CD8-positive, alpha-beta memory T cell (primary cell): ENCODE measurements at regions of chr6 and their contacts with region 1.

Region 1: GRCh38 chr6:30489081-30490025 is at the start of gene HLA-E:
- DNase-seq: peak; percentile 73 to 96 (median 93)
- H3K4me3 ChIP-seq: peak within 1 kb of the TSS; percentile 99
- H3K4me3 Mint-ChIP-seq: peak within 1 kb of the TSS; percentile 93 to 100 (median 99)
- H3K27ac ChIP-seq: peak within 1 kb of the TSS; percentile 98
- H3K27ac Mint-ChIP-seq: peak within 1 kb of the TSS; percentile 93 to 100 (median 98)
- H3K4me1 ChIP-seq: peaks cover 41% of the 10 kb centered on the region
- H3K4me1 Mint-ChIP-seq: peaks cover 39 to 55% (median 44%) of the 10 kb centered on the region in 3 donors
- H3K27me3 ChIP-seq: no peaks in the 10 kb centered on the region
- H3K27me3 Mint-ChIP-seq: peaks cover 0 to 5% of the 10 kb centered on the region in 2 donors
- total RNA-seq, gene HLA-E: 502 to 511 TPM

Region 2: DNA sequence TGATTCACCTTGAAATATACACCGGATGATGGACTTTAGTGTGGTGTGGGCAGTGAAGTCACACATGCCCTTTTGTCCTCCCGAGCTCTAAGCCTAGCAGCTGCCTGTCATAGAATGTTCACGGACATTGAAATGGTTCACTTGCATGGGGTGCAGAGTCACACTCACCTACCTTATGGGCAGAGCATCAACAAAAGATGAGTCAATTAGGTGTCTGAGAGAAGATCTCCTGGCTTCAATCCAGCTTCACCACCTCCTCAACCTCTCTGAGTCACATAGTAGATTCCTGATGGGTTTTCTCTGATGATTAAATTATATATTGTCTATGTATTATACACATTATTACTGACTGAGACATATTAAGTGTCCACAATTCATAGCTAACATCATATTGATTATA is 48.2 kb before region 1 on chr6:
- CTCF ChIA-PET with region 1: no interaction called
- POLR2A ChIA-PET with region 1: no interaction called
- DNase-seq: no peak
- H3K4me3 ChIP-seq: no peak overlapping the region
- H3K4me3 Mint-ChIP-seq: no peak overlapping the region
- H3K27ac ChIP-seq: no peak overlapping the region
- H3K27ac Mint-ChIP-seq: no peak overlapping the region
- H3K4me1 ChIP-seq: peaks cover 4% of the 10 kb centered on the region
- H3K4me1 Mint-ChIP-seq: peaks cover 2 to 8% (median 4%) of the 10 kb centered on the region in 3 donors
- H3K27me3 ChIP-seq: peaks cover 45% of the 10 kb centered on the region
- H3K27me3 Mint-ChIP-seq: peaks cover 49 to 81% of the 10 kb centered on the region in 2 donors

Region 3: DNA sequence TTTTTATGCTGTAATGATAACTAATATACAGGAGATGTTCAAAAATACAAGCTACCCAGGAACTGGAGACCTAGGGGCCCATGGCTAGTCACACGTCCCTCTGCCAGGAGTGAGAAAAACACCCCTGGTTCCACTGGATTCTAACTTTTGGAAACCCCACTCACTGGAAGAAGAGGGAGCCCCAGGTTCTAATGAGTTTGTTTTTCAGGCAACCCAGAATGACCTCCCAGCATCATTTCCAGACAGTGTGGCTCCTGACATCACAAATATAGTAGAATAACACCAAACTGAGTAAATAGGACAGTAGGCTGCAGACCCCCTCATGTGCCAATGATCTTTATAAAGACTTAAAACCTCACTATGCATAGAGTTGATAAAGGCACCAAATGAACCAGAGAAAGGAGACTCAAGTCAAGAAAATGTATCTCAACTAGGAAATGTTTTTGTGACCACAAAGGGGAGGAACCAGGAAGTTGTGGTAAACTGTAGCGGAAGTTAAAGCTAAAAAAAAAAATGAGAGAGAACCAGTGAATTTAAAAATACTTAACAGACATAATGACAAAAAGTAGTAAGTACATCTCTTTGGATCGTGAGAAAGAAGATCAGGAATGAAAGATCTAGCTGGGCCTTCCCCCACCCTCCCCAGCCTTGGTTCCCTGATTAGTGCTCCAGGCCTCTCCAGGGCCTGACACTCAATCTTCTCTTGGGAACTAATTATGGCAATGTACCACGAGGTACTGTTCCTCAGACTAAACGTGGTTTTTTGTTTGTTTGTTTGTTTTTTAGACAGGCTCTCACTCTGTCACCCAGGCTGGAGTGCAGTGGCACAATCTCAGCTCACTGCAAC is 19.8 kb after region 1 on chr6:
- CTCF ChIA-PET with region 1: interaction called, 50 read pairs
- POLR2A ChIA-PET with region 1: interaction called, 94 read pairs
- DNase-seq: peak in 2 of 5 donors; percentile 79 to 84
- H3K4me3 ChIP-seq: peak overlapping the region; percentile 27
- H3K4me3 Mint-ChIP-seq: peak overlapping the region; percentile 59 to 82 (median 72)
- H3K27ac ChIP-seq: no peak overlapping the region
- H3K27ac Mint-ChIP-seq: peak overlapping the region; percentile 71 to 97 (median 86)
- H3K4me1 ChIP-seq: peaks cover 59% of the 10 kb centered on the region
- H3K4me1 Mint-ChIP-seq: peaks cover 53 to 68% (median 68%) of the 10 kb centered on the region in 3 donors
- H3K27me3 ChIP-seq: no peaks in the 10 kb centered on the region
- H3K27me3 Mint-ChIP-seq: no peaks in the 10 kb centered on the region

Region 4: GRCh38 chr6:30515932-30516753 is 26.8 kb after region 1 on chr6:
- CTCF ChIA-PET with region 1: interaction called, 50 read pairs
- POLR2A ChIA-PET with region 1: interaction called, 94 read pairs
- DNase-seq: peak; percentile 79 to 95 (median 95)
- H3K4me3 ChIP-seq: peak overlapping the region; percentile 58
- H3K4me3 Mint-ChIP-seq: peak overlapping the region; percentile 75 to 93 (median 90)
- H3K27ac ChIP-seq: peak overlapping the region; percentile 83
- H3K27ac Mint-ChIP-seq: peak overlapping the region; percentile 85 to 99 (median 98)
- H3K4me1 ChIP-seq: peaks cover 50% of the 10 kb centered on the region
- H3K4me1 Mint-ChIP-seq: peaks cover 52 to 65% (median 63%) of the 10 kb centered on the region in 3 donors
- H3K27me3 ChIP-seq: no peaks in the 10 kb centered on the region
- H3K27me3 Mint-ChIP-seq: no peaks in the 10 kb centered on the region

Region 5: GRCh38 chr6:30533460-30534294 is 44.3 kb after region 1 on chr6:
- CTCF ChIA-PET with region 1: interaction called, 228 read pairs
- POLR2A ChIA-PET with region 1: interaction called, 79 read pairs
- DNase-seq: peak in 1 of 5 donors; percentile 32
- H3K4me3 ChIP-seq: peak overlapping the region; percentile 6
- H3K4me3 Mint-ChIP-seq: peak overlapping the region; percentile 70 to 95 (median 93)
- H3K27ac ChIP-seq: no peak overlapping the region
- H3K27ac Mint-ChIP-seq: peak overlapping the region; percentile 74 to 98 (median 94)
- H3K4me1 ChIP-seq: peaks cover 39% of the 10 kb centered on the region
- H3K4me1 Mint-ChIP-seq: peaks cover 32 to 43% (median 42%) of the 10 kb centered on the region in 3 donors
- H3K27me3 ChIP-seq: no peaks in the 10 kb centered on the region
- H3K27me3 Mint-ChIP-seq: no peaks in the 10 kb centered on the region

Region 6: GRCh38 chr6:30571075-30571768 is 81.9 kb after region 1 on chr6 and contains the start of gene ABCF1:
- CTCF ChIA-PET with region 1: interaction called, 3 read pairs
- POLR2A ChIA-PET with region 1: interaction called, 10 read pairs
- DNase-seq: peak; percentile 99 to 100 (median 99)
- H3K4me3 ChIP-seq: peak within 1 kb of the TSS; percentile 92
- H3K4me3 Mint-ChIP-seq: peak within 1 kb of the TSS; percentile 92 to 100 (median 98)
- H3K27ac ChIP-seq: peak within 1 kb of the TSS; percentile 94
- H3K27ac Mint-ChIP-seq: peak within 1 kb of the TSS; percentile 96 to 100 (median 100)
- H3K4me1 ChIP-seq: peaks cover 53% of the 10 kb centered on the region
- H3K4me1 Mint-ChIP-seq: peaks cover 63 to 73% (median 69%) of the 10 kb centered on the region in 3 donors
- H3K27me3 ChIP-seq: no peaks in the 10 kb centered on the region
- H3K27me3 Mint-ChIP-seq: no peaks in the 10 kb centered on the region
- total RNA-seq, gene ABCF1: 127 to 133 TPM

Region 7: DNA sequence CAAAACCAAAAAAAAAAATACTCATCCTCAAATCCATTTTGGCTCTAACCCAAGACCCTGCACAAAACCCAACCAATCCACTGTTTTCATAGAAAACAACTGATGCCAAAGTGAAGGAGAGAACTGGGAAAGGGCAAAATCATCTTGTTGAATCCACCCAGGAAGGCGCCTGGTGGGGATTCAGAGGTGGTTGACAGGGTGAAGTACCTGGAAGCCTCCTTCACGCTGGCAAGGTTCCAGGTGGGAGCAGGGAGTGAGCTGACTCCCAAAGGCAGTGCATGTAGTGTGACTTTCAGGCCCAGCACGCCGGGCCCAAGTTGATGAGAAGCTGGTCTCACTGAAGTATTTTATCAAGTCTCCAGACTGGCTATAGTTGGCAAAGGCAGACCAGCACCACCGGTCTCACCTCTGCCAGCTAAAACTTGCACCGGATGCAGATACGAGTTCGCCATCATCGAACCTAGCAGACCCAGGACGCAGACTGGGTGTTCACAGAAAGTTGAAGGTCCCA is 111.2 kb after region 1 on chr6:
- CTCF ChIA-PET with region 1: interaction called, 83 read pairs
- POLR2A ChIA-PET with region 1: interaction called, 3 read pairs
- DNase-seq: no peak
- H3K4me3 ChIP-seq: no peak overlapping the region
- H3K4me3 Mint-ChIP-seq: no peak overlapping the region
- H3K27ac ChIP-seq: no peak overlapping the region
- H3K27ac Mint-ChIP-seq: peak overlapping the region in 5 of 8 donors; percentile 33 to 87 (median 73)
- H3K4me1 ChIP-seq: peaks cover 7% of the 10 kb centered on the region
- H3K4me1 Mint-ChIP-seq: peaks cover 22 to 28% (median 24%) of the 10 kb centered on the region in 3 donors
- H3K27me3 ChIP-seq: no peaks in the 10 kb centered on the region
- H3K27me3 Mint-ChIP-seq: peaks cover 0 to 2% of the 10 kb centered on the region in 2 donors